HCT116 (cell line): ENCODE measurements at regions of chr2 and their contacts with region 1.

Region 1: DNA sequence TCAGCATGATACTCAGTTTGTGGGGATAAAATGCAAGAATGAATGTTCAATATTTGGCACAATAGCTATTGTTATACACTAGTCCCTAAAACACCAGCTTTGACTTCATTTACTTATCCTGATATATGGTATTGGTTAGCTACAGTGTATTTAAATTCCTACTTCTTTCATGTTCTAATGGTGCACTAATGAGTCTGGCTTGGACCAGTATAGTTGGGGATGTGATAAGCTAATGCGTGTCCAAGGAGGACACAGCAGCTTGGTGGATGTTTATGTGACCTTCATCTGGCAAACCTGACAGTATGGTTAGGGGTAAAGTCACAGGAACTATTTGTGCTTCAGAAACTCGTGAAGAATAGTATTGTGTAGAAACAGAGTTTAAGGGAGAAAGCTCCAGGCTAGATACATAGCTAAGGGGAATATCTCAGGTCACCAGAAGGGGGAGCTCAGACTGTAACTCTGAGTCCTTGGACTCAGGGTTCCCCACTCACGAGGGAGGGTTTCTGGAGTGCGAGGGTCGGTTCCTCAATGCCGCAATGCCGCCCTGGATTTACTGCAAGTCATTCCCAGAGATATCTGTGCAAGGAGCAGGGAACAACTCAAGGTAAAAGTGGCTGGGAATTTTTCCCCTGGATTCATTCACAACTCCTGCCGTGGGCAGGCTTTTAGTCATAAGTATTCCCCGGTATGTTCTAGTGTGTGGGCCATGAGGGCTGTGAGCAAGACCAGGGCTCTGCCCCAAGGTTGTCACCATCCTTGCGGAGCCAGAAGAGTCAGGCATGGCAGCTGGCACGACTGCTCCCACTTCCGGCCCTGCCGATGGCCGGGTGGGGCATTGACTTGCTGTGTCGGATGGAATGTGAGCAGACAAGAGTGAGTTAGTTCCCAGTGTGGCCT is 14.5 kb downstream of the IL1R2 start:
- DNase-seq: peak; percentile 44
- ATAC-seq: peak; percentile 96
- H3K4me3 ChIP-seq: no peak overlapping the region
- H3K27ac ChIP-seq: no peak overlapping the region
- H3K4me1 ChIP-seq: 0 out of 4 replicates have a peak, but pooled peaks cover 0 to 4% of the 10 kb centered on the region in 2 experiments
- H3K27me3 ChIP-seq: no peaks in the 10 kb centered on the region
- CTCF ChIP-seq: peak; percentile 54 to 84 (median 73); a peak in 5 of 6 replicates
- POLR2A ChIP-seq: no peak
- RAD21 ChIP-seq: peak; percentile 62

Region 2: GRCh38 chr2:102020596-102021181 is 14.5 kb after region 1 on chr2:
- CTCF ChIA-PET with region 1: interaction called, 17 read pairs
- POLR2A ChIA-PET with region 1: no interaction called
- RAD21 ChIA-PET with region 1: no interaction called
- intact Hi-C with region 1: no loop called
- DNase-seq: peak; percentile 61
- ATAC-seq: peak; percentile 99
- H3K4me3 ChIP-seq: no peak overlapping the region
- H3K27ac ChIP-seq: no peak overlapping the region
- H3K4me1 ChIP-seq: no peaks in the 10 kb centered on the region
- H3K27me3 ChIP-seq: no peaks in the 10 kb centered on the region
- CTCF ChIP-seq: peak; percentile 89 to 98 (median 97)
- POLR2A ChIP-seq: no peak
- RAD21 ChIP-seq: peak; percentile 97

Region 3: GRCh38 chr2:102166189-102166845 is 160.1 kb after region 1 on chr2:
- CTCF ChIA-PET with region 1: interaction called, 12 read pairs
- POLR2A ChIA-PET with region 1: no interaction called
- RAD21 ChIA-PET with region 1: no interaction called
- intact Hi-C with region 1: no loop called
- DNase-seq: no peak
- ATAC-seq: peak; percentile 67; the same call in 1 of the 2 replicates
- H3K4me3 ChIP-seq: no peak overlapping the region
- H3K27ac ChIP-seq: no peak overlapping the region
- H3K4me1 ChIP-seq: peaks cover 9 to 12% of the 10 kb centered on the region in 2 experiments
- H3K27me3 ChIP-seq: no peaks in the 10 kb centered on the region
- CTCF ChIP-seq: peak; percentile 40 to 68 (median 47); a peak in 4 of 6 replicates
- POLR2A ChIP-seq: no peak
- RAD21 ChIP-seq: peak; percentile 77

Region 4: DNA sequence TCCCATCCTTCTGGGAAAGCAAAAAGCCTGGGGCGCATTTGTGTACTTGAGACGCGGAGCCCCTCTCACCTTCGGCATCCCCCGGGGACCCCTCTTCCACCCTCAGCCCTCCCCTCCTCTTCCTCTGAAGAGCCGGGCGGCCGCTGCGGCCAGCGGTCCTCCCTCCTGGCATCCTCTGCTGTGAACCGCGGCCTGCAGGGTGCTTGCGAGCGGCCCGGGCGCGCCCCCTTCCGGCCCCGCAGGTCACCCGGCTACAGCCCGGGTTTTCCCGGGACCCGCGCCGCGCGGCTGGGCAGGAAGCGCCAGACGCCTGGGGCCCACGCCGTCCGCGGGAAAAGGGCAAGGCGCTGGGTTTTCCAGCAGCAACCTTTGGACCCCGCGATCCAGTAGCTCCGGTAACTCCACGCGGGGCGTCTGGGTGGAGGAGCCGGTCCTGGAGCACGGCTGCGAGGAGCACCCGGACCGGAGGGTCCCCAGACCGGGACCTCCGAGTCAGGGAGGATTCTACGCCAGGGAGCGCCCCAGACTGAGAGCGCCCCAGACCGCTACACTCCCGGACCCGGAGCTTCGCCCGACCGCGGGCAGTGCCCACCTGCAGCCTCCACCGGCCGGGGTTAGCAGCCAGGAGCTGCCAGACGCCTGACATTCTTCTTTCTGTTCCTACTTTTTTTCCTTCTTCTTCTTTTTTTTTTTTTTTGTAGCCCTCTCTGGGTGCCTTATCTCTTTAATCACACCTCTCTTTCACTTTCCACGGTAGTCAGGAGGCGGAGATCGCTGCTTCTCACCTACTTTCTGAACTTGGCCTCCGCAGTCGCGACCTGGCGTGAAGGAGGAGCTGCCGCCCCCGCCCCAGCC is 349.5 kb after region 1 on chr2 and contains the start of gene IL18R1:
- CTCF ChIA-PET with region 1: no interaction called
- POLR2A ChIA-PET with region 1: no interaction called
- RAD21 ChIA-PET with region 1: no interaction called
- intact Hi-C with region 1: loop called (anchors 5 kb)
- DNase-seq: peak; percentile 32
- ATAC-seq: peak; percentile 100
- H3K4me3 ChIP-seq: peak within 1 kb of the TSS; percentile 57 to 62
- H3K27ac ChIP-seq: no peak within 1 kb of the TSS
- H3K4me1 ChIP-seq: peaks cover 0 to 7% of the 10 kb centered on the region in 2 experiments; a peak in 2 of 4 replicates
- H3K27me3 ChIP-seq: no peaks in the 10 kb centered on the region
- CTCF ChIP-seq: peak; percentile 70 to 81 (median 78)
- POLR2A ChIP-seq: no peak
- RAD21 ChIP-seq: peak; percentile 79
- total RNA-seq, gene IL18R1: 1.5 TPM

Region 5: GRCh38 chr2:102442967-102443828 is 437.0 kb after region 1 on chr2:
- CTCF ChIA-PET with region 1: interaction called, 10 read pairs
- POLR2A ChIA-PET with region 1: no interaction called
- RAD21 ChIA-PET with region 1: no interaction called
- intact Hi-C with region 1: loop called (anchors 5 kb)
- DNase-seq: peak; percentile 18
- ATAC-seq: peak; percentile 73
- H3K4me3 ChIP-seq: no peak overlapping the region
- H3K27ac ChIP-seq: no peak overlapping the region
- H3K4me1 ChIP-seq: no peaks in the 10 kb centered on the region; a peak in 1 of 4 replicates
- H3K27me3 ChIP-seq: no peaks in the 10 kb centered on the region
- CTCF ChIP-seq: peak; percentile 60 to 76 (median 67); a peak in 5 of 6 replicates
- POLR2A ChIP-seq: no peak
- RAD21 ChIP-seq: peak; percentile 73

Region 6: DNA sequence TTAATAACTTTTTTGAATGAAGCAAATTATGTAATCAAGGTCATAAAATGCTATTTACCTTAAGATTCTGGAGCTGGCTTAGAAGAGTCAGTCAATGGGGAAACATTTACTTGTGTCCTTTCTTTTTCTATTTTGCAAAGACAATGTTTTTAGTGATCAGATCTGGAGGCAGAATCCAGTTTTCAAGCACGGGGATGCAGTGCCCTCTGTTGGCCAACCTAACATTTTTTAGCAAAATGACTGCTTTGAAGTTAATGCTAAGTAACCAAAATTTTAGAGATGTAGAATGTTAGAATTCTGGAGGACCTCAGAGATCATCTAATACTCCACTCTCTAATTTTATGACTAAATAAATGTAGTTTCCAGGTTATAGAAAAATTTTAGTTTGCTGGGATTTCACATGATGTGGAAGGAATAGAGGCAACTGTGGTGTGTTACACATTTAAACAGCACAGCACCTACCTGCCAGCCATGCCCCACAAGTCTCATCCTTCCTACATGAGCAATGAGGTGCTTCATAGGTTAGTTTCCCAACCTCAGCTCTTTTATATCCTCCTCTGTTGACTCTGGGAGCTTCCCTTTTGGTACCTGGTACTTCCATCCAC is 443.2 kb after region 1 on chr2:
- CTCF ChIA-PET with region 1: interaction called, 3 read pairs
- POLR2A ChIA-PET with region 1: no interaction called
- RAD21 ChIA-PET with region 1: no interaction called
- intact Hi-C with region 1: loop called (anchors 5 kb)
- DNase-seq: peak; percentile 13
- ATAC-seq: peak; percentile 57
- H3K4me3 ChIP-seq: no peak overlapping the region
- H3K27ac ChIP-seq: no peak overlapping the region
- H3K4me1 ChIP-seq: no peaks in the 10 kb centered on the region
- H3K27me3 ChIP-seq: no peaks in the 10 kb centered on the region
- CTCF ChIP-seq: peak; percentile 62 to 74 (median 65)
- POLR2A ChIP-seq: no peak
- RAD21 ChIP-seq: peak; percentile 75